Uterus (tissue), 4 donors: ENCODE measurements at regions of chr3 and their contacts with region 1.

Region 1: DNA sequence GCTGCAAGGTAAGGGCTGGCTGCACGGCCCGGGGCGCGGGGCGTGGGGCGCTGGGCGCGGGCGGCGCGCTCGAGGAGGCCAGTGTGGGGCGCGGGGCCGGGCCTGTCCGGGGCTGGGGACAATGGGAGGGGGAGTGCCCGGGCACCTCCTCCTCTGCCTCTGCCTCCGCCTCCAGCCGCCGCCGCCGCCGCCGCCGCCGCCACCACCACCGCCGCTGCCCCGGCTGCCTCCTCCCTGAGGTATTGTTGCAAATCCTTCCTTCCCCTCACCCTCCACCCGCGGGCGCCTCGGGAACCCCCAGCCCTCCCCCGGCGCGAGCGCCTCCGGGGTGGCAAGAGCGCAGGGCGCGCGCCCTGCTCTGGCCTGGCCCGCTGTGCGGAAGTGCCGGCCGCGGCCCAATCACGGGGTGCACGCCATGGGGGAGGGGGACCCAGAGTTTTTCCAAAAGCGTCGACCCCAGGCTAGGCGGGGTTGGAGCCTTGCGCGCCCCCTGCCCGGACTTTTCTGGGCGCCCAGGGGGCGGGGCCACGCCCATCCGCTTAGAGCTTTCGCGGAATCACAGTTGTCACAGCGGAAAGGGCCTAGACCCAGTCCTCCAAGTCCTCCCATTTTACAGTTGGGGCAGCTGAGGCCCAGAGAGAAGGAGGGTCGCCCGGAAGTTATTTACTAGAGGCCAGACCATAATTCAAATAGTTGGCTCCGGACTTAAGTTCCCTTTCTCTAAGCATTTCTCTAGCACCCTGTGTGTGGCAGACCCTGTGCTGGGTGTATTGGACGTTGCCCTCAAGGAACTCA is at the start of gene LPP:
- DNase-seq: peak; percentile 71 to 75
- H3K4me3 ChIP-seq: peak within 1 kb of the TSS; percentile 64 to 73
- H3K27ac ChIP-seq: peak within 1 kb of the TSS; percentile 94 to 95
- H3K4me1 ChIP-seq: peaks cover 0 to 4% of the 10 kb centered on the region in 2 donors
- H3K27me3 ChIP-seq: no peaks in the 10 kb centered on the region
- CTCF ChIP-seq: peak in 3 of 4 experiments; percentile 9 to 21 (median 10)
- POLR2A ChIP-seq: peak in 1 of 2 donors; percentile 70
- total RNA-seq, gene LPP: 180 to 1,374 (median 712) TPM

Region 2: DNA sequence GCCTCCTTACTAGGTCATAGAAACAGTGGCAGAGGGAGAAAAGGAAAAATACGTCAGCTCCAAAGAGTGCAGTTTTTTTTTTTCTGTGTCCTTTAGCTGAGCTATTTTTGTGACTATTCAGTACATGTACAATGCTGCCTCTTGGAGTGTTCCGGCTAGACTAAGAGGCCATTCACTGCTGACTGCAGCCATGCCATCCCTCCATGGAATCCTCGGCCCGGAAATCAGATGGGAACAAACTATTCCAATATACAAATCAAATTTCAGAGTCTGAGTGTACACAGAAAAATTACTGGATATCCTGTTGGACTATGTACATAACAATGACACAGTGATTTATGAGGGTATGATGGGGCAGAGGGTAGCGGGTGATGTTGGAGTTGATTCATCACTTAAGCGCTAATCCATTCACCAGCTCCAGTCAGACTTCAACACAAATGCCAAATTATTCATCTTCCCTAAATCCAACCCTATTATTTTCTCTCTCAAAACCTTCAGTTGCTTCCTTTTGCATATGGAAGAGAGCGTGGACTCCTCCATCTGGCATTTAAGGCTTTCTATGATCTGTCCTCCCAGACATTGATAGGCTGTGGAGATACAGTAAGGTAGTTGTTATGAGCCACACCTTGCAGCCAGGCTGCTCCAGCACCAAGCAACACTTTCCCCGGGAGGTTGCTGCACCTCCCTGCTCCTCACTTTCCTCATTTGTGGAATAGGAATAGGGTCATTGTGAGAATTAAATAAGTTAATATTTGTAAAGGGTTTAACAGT is 108.9 kb after region 1 on chr3:
- intact Hi-C with region 1: loop called (anchors 10 kb)
- DNase-seq: peak in 1 of 2 donors; percentile 60
- H3K4me3 ChIP-seq: no peak overlapping the region
- H3K27ac ChIP-seq: peak overlapping the region; percentile 96 to 97
- H3K4me1 ChIP-seq: peaks cover 5 to 14% of the 10 kb centered on the region in 2 donors
- H3K27me3 ChIP-seq: no peaks in the 10 kb centered on the region
- CTCF ChIP-seq: no peak
- POLR2A ChIP-seq: peak in 1 of 2 donors; percentile 15

Region 3: DNA sequence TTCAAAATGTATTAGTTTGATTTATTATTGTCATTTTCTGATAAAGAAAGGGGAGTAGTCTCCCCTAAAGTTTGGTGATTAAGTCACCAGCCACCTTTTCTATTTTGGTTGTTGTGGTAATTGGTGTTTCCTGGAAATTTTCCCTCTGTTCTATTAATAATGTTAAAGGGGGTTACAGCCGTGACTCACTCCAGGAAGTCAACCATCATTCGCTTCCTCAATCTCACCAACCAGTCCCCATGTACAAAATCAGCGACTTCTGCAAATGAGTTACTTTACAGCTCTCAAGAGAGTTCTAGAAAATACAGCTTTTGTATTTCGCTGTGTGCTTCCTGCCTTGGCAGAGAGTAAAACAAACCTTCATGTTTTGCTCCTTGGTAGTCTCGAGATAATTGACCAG is 284.9 kb after region 1 on chr3:
- intact Hi-C with region 1: no loop called
- DNase-seq: no peak
- H3K4me3 ChIP-seq: no peak overlapping the region
- H3K27ac ChIP-seq: peak overlapping the region; percentile 17 to 35
- H3K4me1 ChIP-seq: no peaks in the 10 kb centered on the region
- H3K27me3 ChIP-seq: no peaks in the 10 kb centered on the region
- CTCF ChIP-seq: no peak
- POLR2A ChIP-seq: no peak